ENCODE measurements at regions of chr2 and their contacts with region 1.

Region 1: DNA sequence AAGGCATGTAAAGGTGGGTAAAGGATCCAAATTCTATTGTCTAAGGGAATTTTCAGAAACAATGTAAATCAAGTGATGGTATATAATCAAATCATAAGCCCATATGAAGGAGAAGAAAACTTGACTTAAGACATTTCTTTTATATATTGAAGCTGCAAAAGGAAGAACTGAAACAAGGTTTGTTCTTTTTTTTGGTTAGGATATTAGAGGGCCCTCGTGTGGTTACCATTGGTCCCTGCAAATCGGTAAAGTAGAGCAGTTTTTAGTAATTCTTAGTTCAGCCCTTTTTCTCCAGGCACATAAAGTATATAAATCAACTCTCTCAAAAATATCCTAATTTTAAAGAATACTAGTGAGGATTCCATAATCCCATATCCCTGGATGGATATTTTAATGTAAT is 105.6 kb upstream of the STK17B start:
- DNase-seq: peak; percentile 42
- H3K4me3 Mint-ChIP-seq: no peak overlapping the region
- H3K27ac Mint-ChIP-seq: peak overlapping the region; percentile 69
- H3K4me1 Mint-ChIP-seq: peaks cover 57% of the 10 kb centered on the region
- H3K27me3 Mint-ChIP-seq: no peaks in the 10 kb centered on the region

Region 2: DNA sequence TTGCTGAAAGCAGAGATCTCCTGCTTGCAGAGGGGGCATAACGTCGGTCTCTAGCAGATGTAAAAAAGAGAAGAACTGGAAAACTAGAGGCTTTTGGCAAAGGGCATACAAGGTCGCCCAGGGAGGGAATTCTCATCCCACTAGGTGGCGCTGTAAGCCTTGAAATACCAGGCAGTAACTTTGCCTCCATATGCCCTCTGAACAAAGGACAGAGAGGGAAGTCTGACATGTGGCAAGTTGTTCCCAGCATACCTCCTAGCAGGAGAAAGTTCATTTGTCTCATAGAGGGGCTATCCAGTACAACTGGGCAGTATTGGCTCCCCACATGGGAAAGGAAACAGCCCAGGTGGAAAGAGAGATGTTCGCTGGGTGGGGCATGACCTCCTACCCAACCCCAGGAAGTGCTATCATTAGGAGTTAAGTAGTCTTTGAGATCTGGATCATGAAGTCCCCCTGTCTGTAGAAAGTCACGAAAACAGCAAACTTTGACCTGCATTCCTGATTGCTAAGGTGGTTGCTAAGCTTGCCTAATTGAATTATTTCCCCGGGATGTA is 145.5 kb before region 1 on chr2:
- CTCF ChIA-PET with region 1: interaction called, 16 read pairs
- POLR2A ChIA-PET with region 1: no interaction called
- intact Hi-C with region 1: loop called (anchors 1 kb)
- DNase-seq: peak; percentile 75
- H3K4me3 Mint-ChIP-seq: no peak overlapping the region
- H3K27ac Mint-ChIP-seq: peak overlapping the region; percentile 79
- H3K4me1 Mint-ChIP-seq: peaks cover 12% of the 10 kb centered on the region
- H3K27me3 Mint-ChIP-seq: no peaks in the 10 kb centered on the region

Region 3: DNA sequence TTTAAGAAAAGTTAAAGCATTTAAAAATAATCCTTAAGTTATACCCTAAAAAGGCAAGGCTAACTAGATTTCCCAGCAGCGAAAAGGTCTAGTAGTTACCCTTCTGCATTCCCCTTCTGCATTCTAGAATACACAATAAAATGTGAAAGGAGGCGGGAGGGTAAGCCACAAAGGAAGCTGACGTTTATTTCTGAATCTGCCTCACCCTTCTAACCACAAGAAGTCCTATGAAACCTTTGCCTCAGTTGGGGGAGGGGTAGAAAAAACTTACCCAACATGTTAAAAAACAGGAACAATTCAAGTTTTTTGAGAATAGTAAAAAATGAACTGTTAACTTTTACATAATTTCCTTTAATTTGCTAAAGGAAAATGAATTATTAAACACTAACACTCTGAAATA is 116.9 kb before region 1 on chr2:
- CTCF ChIA-PET with region 1: interaction called, 50 read pairs
- POLR2A ChIA-PET with region 1: interaction called, 4 read pairs
- intact Hi-C with region 1: loop called (anchors 2 kb)
- DNase-seq: peak; percentile 76
- H3K4me3 Mint-ChIP-seq: peak overlapping the region; percentile 39
- H3K27ac Mint-ChIP-seq: peak overlapping the region; percentile 96
- H3K4me1 Mint-ChIP-seq: peaks cover 77% of the 10 kb centered on the region
- H3K27me3 Mint-ChIP-seq: no peaks in the 10 kb centered on the region

Region 4: GRCh38 chr2:196233021-196233804 is 43.8 kb before region 1 on chr2:
- CTCF ChIA-PET with region 1: interaction called, 13 read pairs
- POLR2A ChIA-PET with region 1: interaction called, 3 read pairs
- intact Hi-C with region 1: no loop called
- DNase-seq: no peak
- H3K4me3 Mint-ChIP-seq: peak overlapping the region; percentile 7
- H3K27ac Mint-ChIP-seq: peak overlapping the region; percentile 93
- H3K4me1 Mint-ChIP-seq: peaks cover 89% of the 10 kb centered on the region
- H3K27me3 Mint-ChIP-seq: no peaks in the 10 kb centered on the region

Region 5: GRCh38 chr2:196344397-196344796 is 67.4 kb after region 1 on chr2:
- CTCF ChIA-PET with region 1: no interaction called
- POLR2A ChIA-PET with region 1: no interaction called
- intact Hi-C with region 1: no loop called
- DNase-seq: no peak
- H3K4me3 Mint-ChIP-seq: no peak overlapping the region
- H3K27ac Mint-ChIP-seq: no peak overlapping the region
- H3K4me1 Mint-ChIP-seq: no peaks in the 10 kb centered on the region
- H3K27me3 Mint-ChIP-seq: no peaks in the 10 kb centered on the region